Left cardiac atrium (tissue), 4 donors: ENCODE measurements at regions of chr4 and their contacts with region 1.

Region 1: DNA sequence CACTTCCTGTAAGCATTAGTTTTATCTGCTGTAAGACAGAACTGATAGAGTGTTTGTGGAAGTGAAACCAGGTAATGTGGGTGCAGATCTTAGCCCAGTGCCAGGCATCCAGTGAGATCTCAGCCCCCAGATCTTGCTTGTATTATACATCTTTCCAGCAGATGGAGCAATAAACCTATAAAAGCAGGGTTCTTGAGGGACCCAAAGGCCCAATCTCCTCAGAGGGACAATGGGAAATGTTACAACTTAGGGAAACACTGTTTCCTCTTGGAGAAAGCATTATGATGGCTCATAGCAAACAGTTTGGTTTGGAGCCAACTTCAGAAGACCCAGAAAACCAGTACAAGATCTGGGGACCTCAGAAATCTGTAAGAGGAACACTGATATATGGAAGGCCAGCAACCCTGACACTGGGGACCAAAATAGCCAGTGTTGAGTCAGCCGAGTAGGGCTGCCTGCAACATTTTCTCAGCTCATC is 206.3 kb downstream of the SLC7A11 start:
- DNase-seq: no peak
- ATAC-seq: peak; percentile 88 to 90

Region 2: DNA sequence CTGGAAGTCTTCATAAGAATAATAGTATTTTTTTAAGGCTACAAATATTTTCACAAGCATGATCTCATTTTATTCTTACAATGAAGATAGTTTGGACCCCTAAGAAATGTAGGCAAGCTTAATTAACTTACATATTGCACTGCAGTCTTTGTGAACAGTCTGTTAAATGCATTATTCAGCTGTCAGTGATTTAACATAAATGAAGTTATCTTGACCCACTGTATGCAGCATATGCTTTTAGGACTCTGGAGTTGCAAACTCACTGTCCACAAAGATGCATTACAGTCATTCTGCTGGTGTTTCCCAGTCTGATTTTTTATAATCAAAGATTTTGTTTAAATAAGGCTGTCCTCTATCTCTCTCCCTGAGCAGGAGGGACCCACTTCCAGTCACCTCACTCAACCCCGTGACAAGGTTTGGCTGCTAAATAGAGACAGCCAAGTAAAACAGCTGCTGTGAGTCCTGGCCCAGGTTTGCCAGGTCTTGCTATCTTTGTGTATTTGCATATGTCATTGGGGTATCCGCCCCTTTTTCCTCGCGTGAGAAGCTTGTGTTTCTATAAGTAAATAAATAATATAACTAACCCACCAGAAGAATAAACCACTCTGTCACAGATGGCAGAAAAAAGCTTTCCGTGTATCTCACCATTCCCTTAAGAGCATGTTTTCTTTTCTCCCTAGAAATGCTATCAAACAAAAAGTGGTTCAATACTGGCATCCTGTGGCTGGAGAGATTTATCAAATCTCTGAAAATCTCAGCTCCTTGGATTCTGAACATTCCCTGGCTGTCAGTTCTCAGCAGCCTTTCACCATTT is 139.4 kb after region 1 on chr4:
- intact Hi-C with region 1: loop called (anchors 5 to 10 kb)
- DNase-seq: peak; percentile 26
- ATAC-seq: peak; percentile 61 to 73

Region 3: DNA sequence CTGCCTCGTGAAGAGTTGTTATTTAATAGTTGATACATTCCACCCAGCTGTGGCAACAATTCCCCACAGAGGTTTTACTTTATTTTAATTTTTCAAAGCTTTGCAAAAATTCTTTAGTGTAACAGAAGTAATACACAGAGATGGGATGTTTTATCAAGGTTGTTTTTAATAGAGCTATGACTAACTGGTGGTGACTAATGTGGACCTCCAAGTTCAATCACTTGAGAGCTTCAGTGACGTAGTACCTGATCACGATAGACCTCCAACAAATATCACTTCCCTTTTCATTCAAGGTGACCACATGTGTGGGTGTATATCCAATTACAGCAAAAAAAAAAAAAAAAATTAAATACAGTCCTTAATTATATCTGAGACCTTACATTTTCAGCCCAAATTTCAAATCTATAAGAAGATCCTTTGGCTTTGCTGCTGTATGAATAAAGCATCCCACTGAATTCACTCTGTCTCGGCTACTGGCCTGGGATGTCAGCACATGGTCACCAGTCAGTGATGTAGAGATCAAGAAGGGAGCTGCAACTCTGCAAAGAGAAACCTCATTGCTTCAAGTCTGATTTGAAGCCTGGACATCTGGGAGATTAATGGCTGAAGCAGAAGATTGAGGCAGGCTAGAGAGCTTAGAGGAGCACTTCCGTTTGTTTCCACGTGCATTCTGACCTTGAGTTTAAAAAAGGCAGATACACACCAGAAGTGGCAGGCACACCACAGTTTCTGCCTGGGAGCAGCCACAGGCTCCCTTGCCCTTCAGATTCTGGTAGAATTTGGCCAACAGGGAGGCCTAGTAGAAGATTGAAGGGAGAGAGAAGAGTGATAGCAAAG is 633.9 kb after region 1 on chr4:
- intact Hi-C with region 1: loop called in 1 of 2 experiments (anchors 10 kb)
- DNase-seq: no peak
- ATAC-seq: no peak

Region 4: DNA sequence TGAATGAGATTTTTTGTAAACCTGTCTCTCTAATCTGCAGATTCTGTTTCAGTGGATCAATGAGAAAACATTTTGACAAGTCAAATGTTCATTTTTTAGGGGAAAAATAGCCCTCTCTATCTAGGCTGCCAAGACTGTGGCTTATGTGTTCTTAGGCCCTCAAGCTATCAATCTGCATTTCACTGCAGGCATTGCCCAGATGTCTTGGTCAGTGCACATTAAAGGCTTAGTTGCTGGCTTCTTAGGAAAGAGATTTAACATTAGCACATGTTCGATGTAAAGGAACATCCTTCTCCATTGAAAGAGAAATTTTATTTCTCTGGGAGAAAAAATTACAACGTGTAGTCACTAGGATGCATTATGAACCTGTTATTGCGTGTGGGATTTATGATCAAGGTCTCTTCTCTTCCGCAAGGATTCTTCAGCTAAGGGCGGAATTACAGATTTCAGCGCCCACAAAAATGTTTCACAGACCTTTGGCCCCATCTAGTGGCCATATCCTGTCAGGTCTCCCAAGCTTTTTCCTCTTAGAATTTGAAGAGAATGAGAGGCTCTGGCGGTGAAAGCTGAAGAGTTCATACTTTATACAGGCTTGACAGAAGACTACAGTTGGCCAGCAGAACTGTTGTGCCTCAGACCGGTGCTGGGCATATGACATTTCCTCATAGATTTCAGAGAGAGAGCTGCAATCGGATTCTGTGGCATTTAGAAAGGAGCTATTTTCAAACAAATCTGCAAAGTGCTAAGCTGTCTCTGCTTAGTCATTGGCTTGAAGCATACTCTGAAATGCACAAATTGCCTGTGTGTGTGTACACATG is 835.1 kb after region 1 on chr4:
- intact Hi-C with region 1: loop called in 1 of 2 experiments (anchors 2 kb)
- DNase-seq: peak; percentile 26
- ATAC-seq: peak; percentile 66 to 73